K562 (cell line): ENCODE measurements at regions of chr15 and their contacts with region 1.

Region 1: GRCh38 chr15:66287461-66288057 is 5.8 kb upstream of the DIS3L start:
- DNase-seq: peak; percentile 28 to 47 (median 38)
- ATAC-seq: peak; percentile 32; the same call in 1 of the 3 replicates
- H3K4me3 ChIP-seq: no peak overlapping the region
- H3K27ac ChIP-seq: no peak overlapping the region
- H3K4me1 ChIP-seq: peaks cover 4 to 7% of the 10 kb centered on the region in 2 experiments; a peak in 4 of 5 replicates
- H3K27me3 ChIP-seq: peaks cover 0 to 5% of the 10 kb centered on the region in 2 experiments; a peak in 2 of 5 replicates
- CTCF ChIP-seq: peak; percentile 42 to 76 (median 44); a peak in 4 of 6 replicates
- EP300 ChIP-seq: no peak
- POLR2A ChIP-seq: no peak
- RAD21 ChIP-seq: peak; percentile 41 to 42; a peak in 3 of 4 replicates

Region 2: DNA sequence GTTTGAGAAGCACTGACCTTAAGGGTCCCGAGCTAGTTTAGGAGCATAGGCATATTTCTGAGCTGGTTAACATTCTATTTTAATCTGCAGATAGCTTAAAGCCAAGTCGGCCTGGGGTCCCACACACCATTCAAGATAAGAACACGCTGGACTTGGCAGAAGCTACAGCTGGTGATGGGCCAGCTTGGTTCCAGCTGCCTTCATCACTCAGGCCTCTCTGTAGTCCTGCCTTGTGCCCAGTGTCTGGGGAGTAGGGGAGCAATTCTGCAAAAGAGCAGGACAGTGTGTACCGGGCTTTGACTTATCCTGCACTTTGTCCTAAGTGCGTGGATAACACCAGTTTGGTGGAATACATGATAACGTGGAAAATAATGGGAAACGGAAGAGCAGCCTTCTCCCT is 198.5 kb before region 1 on chr15:
- CTCF ChIA-PET with region 1: no interaction called
- POLR2A ChIA-PET with region 1: no interaction called
- in situ Hi-C with region 1: no loop called
- intact Hi-C with region 1: no loop called
- DNase-seq: no peak
- ATAC-seq: no peak
- H3K4me3 ChIP-seq: no peak overlapping the region
- H3K27ac ChIP-seq: no peak overlapping the region
- H3K4me1 ChIP-seq: no peaks in the 10 kb centered on the region; a peak in 1 of 5 replicates
- H3K27me3 ChIP-seq: peaks cover 7 to 12% of the 10 kb centered on the region in 2 experiments; a peak in 4 of 5 replicates
- CTCF ChIP-seq: no peak
- EP300 ChIP-seq: no peak
- POLR2A ChIP-seq: no peak
- RAD21 ChIP-seq: no peak

Region 3: GRCh38 chr15:66196602-66197001 is 91.0 kb before region 1 on chr15:
- CTCF ChIA-PET with region 1: no interaction called
- POLR2A ChIA-PET with region 1: no interaction called
- in situ Hi-C with region 1: no loop called
- intact Hi-C with region 1: no loop called
- DNase-seq: no peak
- ATAC-seq: no peak
- H3K4me3 ChIP-seq: no peak overlapping the region
- H3K27ac ChIP-seq: no peak overlapping the region
- H3K4me1 ChIP-seq: no peaks in the 10 kb centered on the region; a peak in 1 of 5 replicates
- H3K27me3 ChIP-seq: peaks cover 14 to 48% of the 10 kb centered on the region in 2 experiments
- CTCF ChIP-seq: no peak
- EP300 ChIP-seq: no peak
- POLR2A ChIP-seq: no peak
- RAD21 ChIP-seq: no peak

Region 4: GRCh38 chr15:66233487-66234415 is 53.8 kb before region 1 on chr15:
- CTCF ChIA-PET with region 1: no interaction called
- POLR2A ChIA-PET with region 1: no interaction called
- in situ Hi-C with region 1: no loop called
- intact Hi-C with region 1: loop called (anchors 10 kb)
- DNase-seq: peak; percentile 48 to 67 (median 63)
- ATAC-seq: peak; percentile 92
- H3K4me3 ChIP-seq: no peak overlapping the region
- H3K27ac ChIP-seq: no peak overlapping the region; the same call in 2 of the 3 replicates
- H3K4me1 ChIP-seq: peaks cover 0 to 9% of the 10 kb centered on the region in 2 experiments; a peak in 2 of 5 replicates
- H3K27me3 ChIP-seq: peaks cover 7 to 24% of the 10 kb centered on the region in 2 experiments; a peak in 4 of 5 replicates
- CTCF ChIP-seq: peak; percentile 64 to 75 (median 67)
- EP300 ChIP-seq: peak; percentile 32; the same call in 1 of the 2 replicates
- POLR2A ChIP-seq: no peak
- RAD21 ChIP-seq: peak in 1 of 2 experiments; percentile 51; a peak in 3 of 4 replicates

Region 5: DNA sequence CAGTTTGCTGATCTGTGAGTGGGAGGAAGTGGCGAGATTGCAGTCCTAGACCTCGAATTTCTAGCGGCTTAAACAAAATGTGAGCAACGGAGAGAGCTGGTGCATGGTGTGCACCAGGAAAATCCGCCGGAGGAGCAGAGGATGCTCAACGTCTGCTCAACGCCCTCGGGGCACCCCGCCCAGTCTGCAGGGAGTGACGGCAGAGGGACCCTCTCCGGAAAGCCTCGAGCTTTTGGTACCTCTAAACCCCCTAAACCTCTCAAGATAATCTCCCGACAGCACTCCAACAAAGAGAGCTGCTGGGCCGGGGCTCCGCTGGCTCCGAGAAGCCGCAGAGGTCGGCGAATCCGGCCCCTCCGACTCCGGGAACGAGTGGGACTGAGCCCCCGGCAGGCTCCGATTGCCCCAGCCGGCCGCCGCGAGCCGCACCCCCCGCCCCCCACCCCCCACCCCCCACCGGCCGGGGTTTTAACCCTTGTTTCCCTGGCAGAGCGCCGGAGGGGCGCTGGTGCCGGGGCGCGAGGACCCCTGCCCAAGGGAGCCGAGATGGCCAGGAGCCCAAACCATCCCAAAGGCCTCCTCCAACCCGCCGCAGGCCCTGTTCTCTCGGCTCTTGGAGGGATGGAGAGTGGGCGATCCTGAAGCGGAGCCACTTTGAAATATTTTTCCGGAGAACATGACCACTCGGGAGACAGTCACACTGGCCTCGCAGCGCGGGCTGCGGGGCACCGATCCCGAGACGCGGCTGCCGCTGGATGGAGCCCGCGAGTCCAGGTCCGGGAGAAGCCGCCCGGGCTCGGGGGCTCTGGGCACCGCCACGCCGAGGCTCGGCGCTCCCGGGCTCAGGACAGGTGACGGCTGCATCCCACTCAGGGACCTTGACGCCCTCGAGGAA is 35.5 kb before region 1 on chr15:
- CTCF ChIA-PET with region 1: interaction called, 9 read pairs
- POLR2A ChIA-PET with region 1: no interaction called
- in situ Hi-C with region 1: no loop called
- intact Hi-C with region 1: loop called (anchors 5 kb)
- DNase-seq: peak; percentile 56 to 76 (median 68)
- ATAC-seq: peak; percentile 95
- H3K4me3 ChIP-seq: 0 out of 2 replicates have a peak overlapping the region, but pooled peaks have one; percentile 6
- H3K27ac ChIP-seq: no peak overlapping the region
- H3K4me1 ChIP-seq: peaks cover 3 to 23% of the 10 kb centered on the region in 2 experiments; a peak in 3 of 5 replicates
- H3K27me3 ChIP-seq: peaks cover 54 to 64% of the 10 kb centered on the region in 2 experiments
- CTCF ChIP-seq: peak; percentile 67 to 76 (median 75)
- EP300 ChIP-seq: no peak
- POLR2A ChIP-seq: no peak
- RAD21 ChIP-seq: peak; percentile 64 to 74

Region 6: DNA sequence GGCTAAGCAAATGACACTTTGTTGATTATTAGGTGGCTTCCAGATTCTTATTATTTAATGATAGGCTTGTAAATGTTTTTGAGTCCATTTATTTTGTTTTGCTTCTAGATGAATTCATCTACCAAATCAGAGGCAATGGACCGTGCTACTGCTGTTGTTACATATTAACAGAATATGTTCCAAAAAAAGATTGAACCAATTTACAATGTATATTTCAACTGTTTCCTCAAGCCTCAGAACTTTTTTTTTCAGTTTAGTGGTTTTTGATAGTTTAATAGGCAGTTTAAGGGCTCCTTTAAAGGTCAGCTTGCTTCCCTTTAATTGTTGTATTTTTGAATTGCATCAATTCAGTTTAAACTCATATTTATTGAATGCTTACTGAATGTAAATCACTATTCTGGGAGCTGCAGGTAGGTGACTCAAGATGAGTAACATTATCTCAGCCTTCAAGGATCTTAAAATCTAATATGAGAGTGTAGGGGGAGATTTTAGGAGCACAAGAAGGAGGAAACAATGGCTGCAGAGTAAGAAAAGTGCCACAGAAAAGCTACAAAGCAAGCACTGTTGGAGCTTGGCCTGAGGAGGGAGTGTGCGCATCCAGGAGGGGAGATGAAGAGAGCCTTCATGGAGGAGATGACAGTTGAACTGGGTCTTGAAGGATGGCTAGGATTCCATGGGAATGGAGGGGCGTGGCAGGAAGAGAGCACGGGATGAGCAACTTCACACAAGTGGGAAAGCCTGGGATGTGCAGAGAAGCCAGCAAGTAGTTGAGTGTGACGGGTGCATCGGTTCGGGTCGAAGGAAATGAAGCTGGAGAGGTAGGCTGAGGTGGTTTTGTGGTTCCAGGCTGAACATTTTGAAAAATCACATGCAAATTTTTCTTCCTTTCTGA is 113.8 kb after region 1 on chr15:
- CTCF ChIA-PET with region 1: no interaction called
- POLR2A ChIA-PET with region 1: no interaction called
- in situ Hi-C with region 1: no loop called
- intact Hi-C with region 1: no loop called
- DNase-seq: no peak
- ATAC-seq: peak; percentile 60; the same call in 1 of the 3 replicates
- H3K4me3 ChIP-seq: no peak overlapping the region
- H3K27ac ChIP-seq: no peak overlapping the region
- H3K4me1 ChIP-seq: no peaks in the 10 kb centered on the region; a peak in 1 of 5 replicates
- H3K27me3 ChIP-seq: no peaks in the 10 kb centered on the region
- CTCF ChIP-seq: 0 out of 6 replicates have a peak, but pooled peaks of 1 of the 3 experiments have one; percentile 12
- EP300 ChIP-seq: no peak
- POLR2A ChIP-seq: no peak
- RAD21 ChIP-seq: no peak